ENCODE measurements at regions of chr2 and their contacts with region 1.

Region 1: GRCh38 chr2:12716282-12717190 is at the start of gene TRIB2:
- DNase-seq: peak; percentile 86 to 96 (median 91)
- ATAC-seq: peak; percentile 79
- H3K4me3 ChIP-seq: peak within 1 kb of the TSS; percentile 82 to 96
- H3K4me3 Mint-ChIP-seq: peak within 1 kb of the TSS; percentile 97
- H3K27ac ChIP-seq: peak within 1 kb of the TSS; percentile 72 to 81
- H3K27ac Mint-ChIP-seq: peak within 1 kb of the TSS; percentile 93
- H3K4me1 ChIP-seq: peaks cover 35% of the 10 kb centered on the region
- H3K4me1 Mint-ChIP-seq: peaks cover 46% of the 10 kb centered on the region
- H3K27me3 ChIP-seq: no peaks in the 10 kb centered on the region
- H3K27me3 Mint-ChIP-seq: no peaks in the 10 kb centered on the region
- CTCF ChIP-seq: peak; percentile 38
- total RNA-seq, gene TRIB2: 46.6 to 54.4 TPM

Region 2: GRCh38 chr2:11129598-11130449 is 1586.7 kb before region 1 on chr2:
- CTCF ChIA-PET with region 1: no interaction called
- POLR2A ChIA-PET with region 1: no interaction called
- intact Hi-C with region 1: loop called in 1 of 2 experiments (anchors 10 kb)
- DNase-seq: peak; percentile 53 to 90 (median 81)
- ATAC-seq: peak; percentile 90
- H3K4me3 ChIP-seq: peak overlapping the region; percentile 42 to 49
- H3K4me3 Mint-ChIP-seq: peak overlapping the region; percentile 80
- H3K27ac ChIP-seq: peak overlapping the region in 1 of 2 experiments; percentile 61
- H3K27ac Mint-ChIP-seq: peak overlapping the region; percentile 88
- H3K4me1 ChIP-seq: peaks cover 23% of the 10 kb centered on the region
- H3K4me1 Mint-ChIP-seq: peaks cover 29% of the 10 kb centered on the region
- H3K27me3 ChIP-seq: no peaks in the 10 kb centered on the region
- H3K27me3 Mint-ChIP-seq: no peaks in the 10 kb centered on the region
- CTCF ChIP-seq: peak; percentile 36

Region 3: DNA sequence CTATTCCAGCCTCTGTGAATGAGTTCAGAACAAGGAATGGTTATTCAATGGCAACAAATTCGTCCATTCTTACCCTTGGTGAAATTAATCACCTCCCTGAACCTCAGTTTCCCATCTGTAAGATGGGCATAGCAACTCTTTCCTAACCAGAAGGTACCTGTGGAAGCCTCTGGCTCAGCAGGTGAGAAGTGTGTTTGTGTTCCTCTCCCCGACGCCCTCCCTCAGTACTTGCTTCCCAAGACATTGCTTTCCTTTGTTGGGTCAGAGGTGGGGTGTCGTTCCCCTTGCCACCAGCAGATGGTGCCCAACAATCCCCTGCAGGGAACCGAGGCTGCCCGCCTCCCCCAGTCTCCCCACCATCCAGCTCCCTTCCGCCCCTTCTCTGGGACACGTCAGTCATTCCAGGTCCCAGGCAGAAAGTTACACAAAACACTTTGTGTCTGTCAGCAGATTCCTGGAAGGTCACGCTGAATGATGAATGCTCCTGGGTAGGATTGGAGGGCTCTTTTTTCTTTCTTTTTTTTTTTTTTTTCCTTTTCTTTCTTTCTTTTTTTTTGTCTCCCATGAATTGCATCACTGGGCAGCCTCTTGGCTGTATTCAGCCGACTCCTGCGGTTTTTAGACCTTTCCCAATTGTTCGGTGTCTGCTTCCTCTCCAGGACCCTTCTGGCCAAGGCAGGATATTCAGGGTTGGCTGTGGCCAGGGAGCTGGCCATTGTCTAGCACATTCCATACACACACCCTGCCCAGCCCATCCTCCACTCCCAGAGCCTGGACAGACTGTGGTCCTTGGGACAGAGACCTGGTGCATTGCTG is 852.8 kb before region 1 on chr2:
- CTCF ChIA-PET with region 1: interaction called, 37 read pairs
- POLR2A ChIA-PET with region 1: interaction called, 3 read pairs
- intact Hi-C with region 1: loop called (anchors 1 kb)
- DNase-seq: peak; percentile 27 to 81 (median 68)
- ATAC-seq: peak; percentile 93
- H3K4me3 ChIP-seq: no peak overlapping the region
- H3K4me3 Mint-ChIP-seq: peak overlapping the region; percentile 27
- H3K27ac ChIP-seq: no peak overlapping the region
- H3K27ac Mint-ChIP-seq: no peak overlapping the region
- H3K4me1 ChIP-seq: peaks cover 3% of the 10 kb centered on the region
- H3K4me1 Mint-ChIP-seq: peaks cover 12% of the 10 kb centered on the region
- H3K27me3 ChIP-seq: no peaks in the 10 kb centered on the region
- H3K27me3 Mint-ChIP-seq: peaks cover 2% of the 10 kb centered on the region
- CTCF ChIP-seq: peak; percentile 97

Region 4: DNA sequence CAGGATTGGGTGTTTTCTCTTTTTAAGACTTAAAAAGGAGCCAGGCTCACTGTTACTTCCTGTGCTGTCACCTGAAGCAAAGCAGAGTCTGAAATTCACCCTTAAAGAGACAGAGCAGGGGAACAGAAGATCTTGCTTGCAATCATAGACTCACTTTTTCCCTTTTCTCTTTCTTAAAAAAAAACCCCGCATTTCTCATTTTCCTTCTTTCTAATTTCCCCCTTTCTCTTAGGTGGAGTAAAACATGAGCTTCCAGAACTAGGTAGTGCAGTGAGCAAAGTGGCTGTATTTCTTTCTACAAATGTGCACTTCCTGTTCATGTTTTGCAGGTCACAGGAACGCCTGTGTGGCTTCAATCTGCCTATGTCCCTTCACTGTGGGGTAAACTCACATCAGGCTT is 588.9 kb before region 1 on chr2:
- CTCF ChIA-PET with region 1: interaction called, 3 read pairs
- POLR2A ChIA-PET with region 1: no interaction called
- intact Hi-C with region 1: loop called in 1 of 2 experiments (anchors 5 kb)
- DNase-seq: peak in 3 of 9 experiments; percentile 13 to 54 (median 32)
- ATAC-seq: peak; percentile 75
- H3K4me3 ChIP-seq: peak overlapping the region; percentile 4 to 34
- H3K4me3 Mint-ChIP-seq: peak overlapping the region; percentile 71
- H3K27ac ChIP-seq: peak overlapping the region; percentile 30 to 58
- H3K27ac Mint-ChIP-seq: no peak overlapping the region
- H3K4me1 ChIP-seq: peaks cover 65% of the 10 kb centered on the region
- H3K4me1 Mint-ChIP-seq: no peaks in the 10 kb centered on the region
- H3K27me3 ChIP-seq: no peaks in the 10 kb centered on the region
- H3K27me3 Mint-ChIP-seq: no peaks in the 10 kb centered on the region
- CTCF ChIP-seq: no peak

Region 5: GRCh38 chr2:12352889-12353288 is 363.6 kb before region 1 on chr2:
- CTCF ChIA-PET with region 1: no interaction called
- POLR2A ChIA-PET with region 1: no interaction called
- intact Hi-C with region 1: no loop called
- DNase-seq: no peak
- ATAC-seq: no peak
- H3K4me3 ChIP-seq: no peak overlapping the region
- H3K4me3 Mint-ChIP-seq: no peak overlapping the region
- H3K27ac ChIP-seq: no peak overlapping the region
- H3K27ac Mint-ChIP-seq: no peak overlapping the region
- H3K4me1 ChIP-seq: no peaks in the 10 kb centered on the region
- H3K4me1 Mint-ChIP-seq: no peaks in the 10 kb centered on the region
- H3K27me3 ChIP-seq: no peaks in the 10 kb centered on the region
- H3K27me3 Mint-ChIP-seq: no peaks in the 10 kb centered on the region
- CTCF ChIP-seq: no peak

Region 6: DNA sequence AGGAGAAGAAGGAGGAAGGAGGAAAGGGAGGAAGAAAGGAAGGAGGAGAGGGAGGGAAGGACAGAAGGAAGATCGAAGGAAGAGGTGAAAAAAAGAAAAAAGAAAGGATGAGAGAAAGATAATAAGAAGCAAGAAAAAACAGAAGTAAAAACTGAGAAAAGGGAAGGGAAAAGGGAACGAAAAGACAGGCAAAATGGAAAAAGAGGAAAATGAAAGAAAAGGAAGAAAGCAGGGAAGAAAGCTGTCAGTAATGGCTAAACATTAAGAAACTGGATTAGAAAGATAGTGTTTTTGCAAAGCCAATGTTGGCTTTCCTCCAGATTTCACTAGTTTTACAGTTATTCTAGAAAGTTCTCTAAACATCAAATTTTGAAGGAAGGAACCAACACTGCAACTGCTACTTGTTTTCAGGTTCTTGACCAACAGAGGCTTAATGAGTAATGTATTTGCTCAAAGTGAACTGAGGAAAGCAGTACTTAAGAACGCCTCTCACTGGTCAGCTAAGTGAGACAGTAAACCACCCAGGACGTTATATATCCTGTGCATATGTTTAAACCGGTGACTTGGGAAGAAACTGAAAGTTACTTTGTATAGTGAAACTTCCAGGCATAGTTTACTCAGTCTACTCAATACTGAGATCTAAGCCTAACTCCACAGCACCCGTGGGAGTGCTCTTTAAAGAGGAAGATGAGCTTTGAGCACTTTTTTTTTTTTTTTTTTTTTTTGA is 286.0 kb before region 1 on chr2:
- CTCF ChIA-PET with region 1: interaction called, 14 read pairs
- POLR2A ChIA-PET with region 1: interaction called, 5 read pairs
- intact Hi-C with region 1: loop called in 1 of 2 experiments (anchors 1 kb)
- DNase-seq: peak in 2 of 9 experiments; percentile 11 to 45
- ATAC-seq: peak; percentile 40
- H3K4me3 ChIP-seq: peak overlapping the region in 1 of 2 experiments; percentile 32
- H3K4me3 Mint-ChIP-seq: peak overlapping the region; percentile 77
- H3K27ac ChIP-seq: peak overlapping the region in 1 of 2 experiments; percentile 17
- H3K27ac Mint-ChIP-seq: peak overlapping the region; percentile 71
- H3K4me1 ChIP-seq: no peaks in the 10 kb centered on the region
- H3K4me1 Mint-ChIP-seq: peaks cover 20% of the 10 kb centered on the region
- H3K27me3 ChIP-seq: no peaks in the 10 kb centered on the region
- H3K27me3 Mint-ChIP-seq: no peaks in the 10 kb centered on the region
- CTCF ChIP-seq: no peak

Region 7: DNA sequence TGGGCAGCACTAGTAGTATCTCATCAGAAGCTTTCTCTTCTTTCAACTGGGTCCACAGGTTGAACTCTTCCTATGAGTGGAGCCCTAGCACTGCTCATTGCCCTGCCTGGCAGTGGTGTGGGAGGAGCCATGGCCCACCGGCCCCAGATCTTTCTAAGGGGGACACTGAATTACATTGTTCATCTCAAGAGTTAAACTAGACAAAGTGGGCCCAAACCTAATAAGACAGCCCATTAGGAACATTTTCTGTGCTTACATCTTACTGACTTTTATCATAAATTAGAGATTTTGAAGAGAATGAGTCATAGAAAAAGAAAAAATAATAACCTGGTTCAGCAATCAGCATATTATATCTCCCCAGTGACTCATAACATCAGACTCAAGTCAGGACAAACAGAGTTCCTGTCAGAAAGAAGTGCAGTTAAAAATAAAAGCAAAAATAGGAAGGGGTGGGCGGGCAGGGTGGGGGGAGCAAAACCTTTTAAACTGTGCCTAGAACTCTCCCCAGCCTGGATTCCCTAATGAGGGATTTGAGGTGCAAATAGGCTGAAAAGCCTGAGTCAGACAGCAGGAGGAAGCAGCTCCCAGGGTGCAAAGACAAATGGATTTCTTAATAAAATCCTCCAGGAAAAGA is 161.4 kb before region 1 on chr2:
- CTCF ChIA-PET with region 1: interaction called, 6 read pairs
- POLR2A ChIA-PET with region 1: no interaction called
- intact Hi-C with region 1: loop called in 1 of 2 experiments (anchors 1 kb)
- DNase-seq: peak in 1 of 9 experiments; percentile 13
- ATAC-seq: peak; percentile 61
- H3K4me3 ChIP-seq: no peak overlapping the region
- H3K4me3 Mint-ChIP-seq: no peak overlapping the region
- H3K27ac ChIP-seq: no peak overlapping the region
- H3K27ac Mint-ChIP-seq: peak overlapping the region; percentile 53
- H3K4me1 ChIP-seq: peaks cover 25% of the 10 kb centered on the region
- H3K4me1 Mint-ChIP-seq: peaks cover 38% of the 10 kb centered on the region
- H3K27me3 ChIP-seq: no peaks in the 10 kb centered on the region
- H3K27me3 Mint-ChIP-seq: no peaks in the 10 kb centered on the region
- CTCF ChIP-seq: no peak

Region 8: GRCh38 chr2:12856934-12857601 is 140.5 kb after region 1 on chr2:
- CTCF ChIA-PET with region 1: no interaction called
- POLR2A ChIA-PET with region 1: interaction called, 10 read pairs
- intact Hi-C with region 1: loop called in 1 of 2 experiments (anchors 2 kb)
- DNase-seq: peak in 7 of 9 experiments; percentile 12 to 78 (median 32)
- ATAC-seq: peak; percentile 87
- H3K4me3 ChIP-seq: no peak overlapping the region
- H3K4me3 Mint-ChIP-seq: no peak overlapping the region
- H3K27ac ChIP-seq: peak overlapping the region in 1 of 2 experiments; percentile 41
- H3K27ac Mint-ChIP-seq: no peak overlapping the region
- H3K4me1 ChIP-seq: peaks cover 41% of the 10 kb centered on the region
- H3K4me1 Mint-ChIP-seq: peaks cover 16% of the 10 kb centered on the region
- H3K27me3 ChIP-seq: no peaks in the 10 kb centered on the region
- H3K27me3 Mint-ChIP-seq: peaks cover 12% of the 10 kb centered on the region
- CTCF ChIP-seq: no peak